Right cardiac atrium (tissue), 5 donors: ENCODE measurements at regions of chr3 and their contacts with region 1.

Region 1: DNA sequence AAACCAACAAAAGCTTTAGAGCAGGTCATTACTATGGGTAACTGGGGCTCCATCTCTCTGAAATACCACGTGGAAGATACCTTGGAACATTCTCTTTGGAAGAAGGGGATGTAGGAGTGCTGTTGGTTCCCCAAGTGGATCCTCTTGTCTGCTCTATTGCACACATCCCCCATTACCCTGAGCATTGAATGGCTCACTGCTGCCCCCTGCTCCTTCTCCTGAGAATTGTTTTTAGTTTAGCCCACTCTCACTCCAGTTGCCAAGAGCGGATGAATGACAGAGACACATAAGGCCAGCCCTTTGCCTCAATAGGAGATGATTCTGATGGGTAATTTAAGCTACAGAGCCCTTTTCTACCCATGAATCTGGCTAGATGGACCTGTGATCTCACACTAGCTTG is 135.6 kb upstream of the SUCLG2 start:
- DNase-seq: peak in 1 of 3 donors; percentile 56
- ATAC-seq: peak; percentile 41 to 48
- H3K4me3 ChIP-seq: no peak overlapping the region
- H3K27ac ChIP-seq: no peak overlapping the region
- H3K4me1 ChIP-seq: no peaks in the 10 kb centered on the region
- H3K27me3 ChIP-seq: no peaks in the 10 kb centered on the region

Region 2: GRCh38 chr3:67384760-67385397 is 405.2 kb before region 1 on chr3:
- intact Hi-C with region 1: loop called in 2 of 4 experiments (anchors 5 to 10 kb)
- DNase-seq: peak in 2 of 3 donors; percentile 25 to 34
- ATAC-seq: peak in 1 of 2 donors; percentile 41
- H3K4me3 ChIP-seq: no peak overlapping the region
- H3K27ac ChIP-seq: no peak overlapping the region
- H3K4me1 ChIP-seq: no peaks in the 10 kb centered on the region
- H3K27me3 ChIP-seq: no peaks in the 10 kb centered on the region

Region 3: GRCh38 chr3:67846166-67846565 is 56.1 kb after region 1 on chr3:
- intact Hi-C with region 1: no loop called
- DNase-seq: no peak
- ATAC-seq: no peak
- H3K4me3 ChIP-seq: no peak overlapping the region
- H3K27ac ChIP-seq: no peak overlapping the region
- H3K4me1 ChIP-seq: no peaks in the 10 kb centered on the region
- H3K27me3 ChIP-seq: no peaks in the 10 kb centered on the region